Left colon (tissue), 2 donors: ENCODE measurements at regions of chr4 and their contacts with region 1.

Region 1: DNA sequence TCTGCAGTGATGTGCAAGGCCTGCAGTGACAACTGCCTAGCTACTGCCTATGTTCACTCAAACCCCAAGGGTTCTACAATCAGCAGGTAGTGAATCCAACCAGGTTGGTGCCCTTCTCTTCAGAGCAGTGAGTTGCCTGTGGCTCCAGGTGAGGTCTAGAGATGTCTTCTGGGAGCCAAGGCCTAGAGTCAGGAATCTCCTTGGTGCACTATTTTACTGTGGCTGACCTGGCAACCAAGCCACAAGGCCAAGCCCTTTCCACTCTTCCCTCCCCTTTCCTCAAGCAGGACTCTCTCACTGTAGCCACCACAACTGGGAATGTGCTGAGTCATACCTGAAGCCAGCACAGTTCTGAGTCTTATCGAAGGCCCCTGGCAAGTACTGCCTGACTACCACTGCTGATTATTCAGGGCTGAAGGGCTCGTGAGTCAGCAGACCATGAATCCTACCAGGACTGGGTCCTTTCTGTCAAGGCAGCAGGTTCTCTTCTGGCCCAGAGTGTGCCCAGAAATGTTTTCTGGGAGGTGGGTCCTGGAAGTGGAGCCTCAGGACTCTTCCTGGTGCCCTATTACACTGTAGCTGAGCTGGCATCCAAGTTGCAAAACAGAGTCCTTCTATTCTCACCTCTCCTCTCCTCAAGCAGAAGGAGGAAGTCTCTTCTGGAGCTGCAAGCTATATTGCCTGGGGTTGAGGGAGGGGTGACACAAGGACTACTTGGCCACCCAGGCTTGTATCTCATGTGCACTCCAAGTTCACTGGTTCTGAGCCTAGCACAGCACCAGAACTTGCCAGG is 111.6 kb downstream of the BTC start:
- DNase-seq: no peak
- ATAC-seq: peak; percentile 38

Region 2: DNA sequence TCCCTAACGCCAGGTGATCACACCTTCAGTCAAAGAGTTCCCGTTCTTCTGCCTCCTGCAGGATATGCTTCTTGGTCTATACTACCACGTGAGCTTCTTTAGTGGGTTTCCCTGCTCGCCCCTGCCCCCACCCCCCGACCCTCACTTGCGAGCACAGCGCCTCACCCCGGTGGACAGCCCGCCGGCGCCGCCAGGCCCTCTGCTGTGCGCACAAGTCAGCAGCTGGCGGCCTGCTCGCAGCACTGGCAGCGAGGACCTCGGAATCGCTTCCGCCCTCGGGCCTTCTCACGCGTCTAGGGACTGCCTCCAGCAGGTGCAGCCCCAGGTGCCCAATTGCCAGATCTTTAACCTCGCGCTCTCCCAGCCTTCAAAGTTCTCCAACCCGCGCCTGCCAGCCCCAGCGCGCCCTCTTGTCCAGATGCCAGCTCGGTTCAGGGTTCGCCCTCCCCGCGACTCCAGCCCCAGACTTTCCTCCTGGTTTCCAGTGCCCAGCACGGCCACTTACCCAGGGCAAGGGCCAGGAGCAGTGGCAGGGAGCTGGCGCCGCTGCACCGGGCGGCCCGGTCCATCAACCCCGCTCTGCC is 111.1 kb after region 1 on chr4:
- intact Hi-C with region 1: loop called in 1 of 2 experiments (anchors 10 kb)
- DNase-seq: peak; percentile 79 to 81
- ATAC-seq: peak; percentile 89